ENCODE measurements at regions of chr18 and their contacts with region 1.

Region 1: DNA sequence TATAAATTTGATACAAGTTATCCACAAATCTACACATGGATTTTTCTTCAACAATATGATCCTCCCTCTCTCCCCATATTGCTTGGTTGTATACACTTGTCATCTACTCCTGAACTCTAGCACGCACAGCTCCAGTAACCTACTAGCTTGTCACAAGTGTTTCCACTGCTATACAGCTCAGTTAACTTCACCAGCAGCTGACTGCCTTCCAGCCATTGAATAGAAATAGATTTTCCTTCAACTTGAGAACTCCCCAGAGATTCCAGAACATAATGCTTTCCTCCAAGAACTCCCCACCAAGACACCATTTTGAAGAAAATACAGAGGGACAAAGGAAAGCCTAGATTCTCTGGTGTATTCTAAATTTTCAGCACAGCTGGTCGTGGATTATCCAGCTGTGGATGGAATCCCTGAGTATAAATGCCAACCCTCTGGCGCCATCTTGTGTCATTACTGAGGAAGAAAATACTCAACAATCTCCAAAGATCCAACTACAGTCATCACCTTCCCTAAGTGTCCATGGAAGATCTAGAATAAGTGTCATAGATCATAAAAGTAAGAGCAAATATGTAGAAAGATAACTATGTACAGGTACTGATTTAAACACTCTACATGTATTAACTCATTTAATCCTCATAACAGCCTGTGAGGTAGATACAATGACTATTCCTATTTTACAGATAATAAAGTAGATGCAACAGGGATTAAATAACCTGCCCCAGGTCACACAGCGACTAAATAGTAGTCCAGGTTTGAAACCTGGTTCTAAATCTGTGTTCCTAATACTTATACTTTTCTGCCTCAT is 156.7 kb downstream of the ARHGAP28 start:
- DNase-seq: peak; percentile 37
- ATAC-seq: peak; percentile 72
- H3K4me3 Mint-ChIP-seq: no peak overlapping the region
- H3K27ac Mint-ChIP-seq: no peak overlapping the region
- H3K4me1 Mint-ChIP-seq: peaks cover 16% of the 10 kb centered on the region
- H3K27me3 Mint-ChIP-seq: no peaks in the 10 kb centered on the region
- CTCF ChIP-seq: peak; percentile 60

Region 2: GRCh38 chr18:6482198-6482977 is 403.8 kb before region 1 on chr18:
- CTCF ChIA-PET with region 1: interaction called, 11 read pairs
- POLR2A ChIA-PET with region 1: no interaction called
- DNase-seq: peak; percentile 85
- ATAC-seq: peak; percentile 99
- H3K4me3 Mint-ChIP-seq: no peak overlapping the region; the same call in 1 of the 2 replicates
- H3K27ac Mint-ChIP-seq: peak overlapping the region; percentile 73; the same call in 1 of the 2 replicates
- H3K4me1 Mint-ChIP-seq: peaks cover 31% of the 10 kb centered on the region
- H3K27me3 Mint-ChIP-seq: no peaks in the 10 kb centered on the region
- CTCF ChIP-seq: peak; percentile 35; the same call in 1 of the 2 replicates

Region 3: GRCh38 chr18:6543330-6543908 is 342.8 kb before region 1 on chr18:
- CTCF ChIA-PET with region 1: interaction called, 77 read pairs
- POLR2A ChIA-PET with region 1: no interaction called
- DNase-seq: no peak
- ATAC-seq: peak; percentile 21
- H3K4me3 Mint-ChIP-seq: no peak overlapping the region
- H3K27ac Mint-ChIP-seq: no peak overlapping the region
- H3K4me1 Mint-ChIP-seq: peaks cover 30% of the 10 kb centered on the region
- H3K27me3 Mint-ChIP-seq: no peaks in the 10 kb centered on the region
- CTCF ChIP-seq: peak; percentile 44

Region 4: GRCh38 chr18:6929370-6930102 is 43.3 kb after region 1 on chr18:
- CTCF ChIA-PET with region 1: no interaction called
- POLR2A ChIA-PET with region 1: no interaction called
- DNase-seq: peak; percentile 77
- ATAC-seq: peak; percentile 95
- H3K4me3 Mint-ChIP-seq: no peak overlapping the region
- H3K27ac Mint-ChIP-seq: no peak overlapping the region
- H3K4me1 Mint-ChIP-seq: no peaks in the 10 kb centered on the region
- H3K27me3 Mint-ChIP-seq: no peaks in the 10 kb centered on the region; the same call in 1 of the 2 replicates
- CTCF ChIP-seq: no peak

Measured in WTC11 (cell line).